ENCODE measurements at regions of chr3 and their contacts with region 1.

Region 1: DNA sequence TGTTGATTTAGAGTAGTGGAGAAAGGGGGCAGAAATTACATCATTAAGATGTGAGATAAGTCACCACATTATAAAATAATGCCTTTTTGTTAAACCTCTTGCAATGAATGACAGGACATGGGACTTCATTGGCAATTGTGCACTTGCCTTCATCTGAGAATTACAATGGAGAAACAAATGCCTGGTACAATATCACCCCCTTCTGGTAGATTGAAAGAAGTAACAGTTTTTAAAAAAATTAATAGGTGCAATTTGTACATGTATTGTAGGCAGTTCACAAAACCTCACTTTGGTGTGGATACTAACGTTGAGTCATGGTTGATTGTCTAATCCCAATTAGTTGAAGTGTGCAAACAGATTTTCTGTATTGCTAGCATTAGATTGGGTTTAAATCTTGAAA is 4.6 kb upstream of the P2RY14 start:
- DNase-seq: no peak
- H3K4me3 Mint-ChIP-seq: no peak overlapping the region
- H3K27ac Mint-ChIP-seq: no peak overlapping the region
- H3K4me1 Mint-ChIP-seq: peaks cover 28% of the 10 kb centered on the region
- H3K27me3 Mint-ChIP-seq: no peaks in the 10 kb centered on the region

Region 2: GRCh38 chr3:151156618-151157216 is 126.2 kb before region 1 on chr3:
- CTCF ChIA-PET with region 1: interaction called, 30 read pairs
- intact Hi-C with region 1: loop called (anchors 1 kb)
- DNase-seq: peak; percentile 61
- H3K4me3 Mint-ChIP-seq: no peak overlapping the region
- H3K27ac Mint-ChIP-seq: no peak overlapping the region
- H3K4me1 Mint-ChIP-seq: no peaks in the 10 kb centered on the region
- H3K27me3 Mint-ChIP-seq: no peaks in the 10 kb centered on the region

Region 3: GRCh38 chr3:151305101-151305750 is 22.3 kb after region 1 on chr3:
- CTCF ChIA-PET with region 1: interaction called, 10 read pairs
- intact Hi-C with region 1: loop called (anchors 1 kb)
- DNase-seq: peak; percentile 37
- H3K4me3 Mint-ChIP-seq: no peak overlapping the region
- H3K27ac Mint-ChIP-seq: no peak overlapping the region
- H3K4me1 Mint-ChIP-seq: peaks cover 59% of the 10 kb centered on the region
- H3K27me3 Mint-ChIP-seq: peaks cover 18% of the 10 kb centered on the region

Region 4: GRCh38 chr3:151356794-151357462 is 74.0 kb after region 1 on chr3:
- CTCF ChIA-PET with region 1: no interaction called
- intact Hi-C with region 1: no loop called
- DNase-seq: no peak
- H3K4me3 Mint-ChIP-seq: no peak overlapping the region
- H3K27ac Mint-ChIP-seq: no peak overlapping the region
- H3K4me1 Mint-ChIP-seq: no peaks in the 10 kb centered on the region
- H3K27me3 Mint-ChIP-seq: peaks cover 3% of the 10 kb centered on the region

Region 5: DNA sequence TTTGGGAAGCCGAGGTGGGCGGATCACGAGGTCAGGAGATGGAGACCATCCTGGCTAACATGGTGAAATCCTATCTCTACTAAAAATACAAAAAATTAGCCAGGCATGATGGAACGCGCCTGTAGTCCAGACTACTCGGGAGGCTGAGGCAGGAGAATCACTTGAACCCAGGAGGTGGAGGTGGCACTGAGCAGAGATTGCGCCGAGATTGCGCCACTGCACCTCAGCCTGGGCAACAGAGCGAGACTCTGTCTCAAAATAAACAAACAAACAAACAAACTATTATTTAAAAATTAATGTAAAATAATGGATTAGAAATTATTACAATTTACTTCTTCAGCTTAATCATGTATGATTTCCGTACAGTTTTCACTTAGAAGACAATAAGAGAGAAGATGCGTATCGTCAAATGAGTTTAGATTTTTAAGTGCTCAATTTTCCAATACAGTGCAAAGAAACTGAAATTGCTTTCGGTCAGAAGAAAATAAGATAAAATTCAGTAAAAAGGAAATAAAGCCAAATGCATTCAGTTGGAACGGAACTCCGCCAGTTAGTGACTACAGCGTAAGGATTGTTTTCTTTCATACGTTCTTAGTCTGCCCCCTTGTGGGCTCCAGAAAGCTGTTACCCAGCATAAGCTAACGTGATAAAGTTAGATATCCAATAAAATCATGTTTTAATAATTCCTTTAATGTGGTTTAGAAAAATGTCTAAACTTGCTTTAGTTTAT is 555.8 kb after region 1 on chr3:
- CTCF ChIA-PET with region 1: interaction called, 3 read pairs
- intact Hi-C with region 1: loop called (anchors 2 kb)
- DNase-seq: peak; percentile 53
- H3K4me3 Mint-ChIP-seq: no peak overlapping the region
- H3K27ac Mint-ChIP-seq: no peak overlapping the region
- H3K4me1 Mint-ChIP-seq: peaks cover 2% of the 10 kb centered on the region
- H3K27me3 Mint-ChIP-seq: no peaks in the 10 kb centered on the region